ENCODE measurements at regions of chr5 and their contacts with region 1.

Region 1: DNA sequence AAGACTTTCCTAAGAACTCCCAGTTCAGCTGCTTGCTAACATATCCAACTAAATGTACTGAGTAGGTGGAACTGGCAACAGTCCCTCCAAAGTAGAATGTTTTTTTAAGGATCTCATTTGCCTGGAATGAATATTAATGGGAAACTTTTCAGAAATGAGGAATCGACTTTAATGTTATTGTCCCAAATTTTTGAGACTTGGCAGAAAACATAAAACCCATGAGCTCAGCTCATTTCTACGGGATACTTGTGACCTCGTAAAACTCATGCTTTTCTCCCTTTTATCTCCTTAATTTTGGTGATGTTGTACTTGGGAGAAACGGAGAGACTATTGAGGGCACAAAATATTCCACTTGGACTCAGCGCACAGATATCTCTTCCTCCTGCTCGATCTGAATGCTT is 296.8 kb downstream of the EBF1 start:
- DNase-seq: no peak
- ATAC-seq: no peak
- H3K4me3 ChIP-seq: no peak overlapping the region
- H3K27ac ChIP-seq: no peak overlapping the region
- H3K4me1 ChIP-seq: no peaks in the 10 kb centered on the region
- H3K27me3 ChIP-seq: no peaks in the 10 kb centered on the region
- CTCF ChIP-seq: no peak

Region 2: DNA sequence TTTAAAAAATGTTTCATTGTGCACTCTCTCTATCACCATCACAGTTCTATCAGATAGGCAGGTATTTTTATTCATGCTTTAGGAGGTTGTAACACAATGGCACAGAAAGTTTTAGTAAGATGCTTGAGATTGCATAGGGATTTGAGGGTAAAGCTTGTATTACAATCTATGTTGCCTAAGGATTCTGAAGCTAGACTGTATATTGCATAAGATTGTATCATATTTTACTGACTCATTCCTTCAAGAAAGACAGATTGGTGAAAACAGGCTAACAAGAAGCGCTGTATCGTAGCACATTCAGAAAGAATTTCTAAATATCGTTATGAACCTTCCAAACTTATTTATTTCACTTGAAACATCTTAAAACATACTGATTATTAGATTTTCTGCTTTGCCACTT is 280.9 kb before region 1 on chr5:
- intact Hi-C with region 1: no loop called
- DNase-seq: no peak
- ATAC-seq: no peak
- H3K4me3 ChIP-seq: no peak overlapping the region
- H3K27ac ChIP-seq: no peak overlapping the region
- H3K4me1 ChIP-seq: no peaks in the 10 kb centered on the region
- H3K27me3 ChIP-seq: no peaks in the 10 kb centered on the region
- CTCF ChIP-seq: no peak

Region 3: GRCh38 chr5:158841481-158842276 is 38.7 kb after region 1 on chr5:
- intact Hi-C with region 1: no loop called
- DNase-seq: no peak
- ATAC-seq: no peak
- H3K4me3 ChIP-seq: no peak overlapping the region
- H3K27ac ChIP-seq: no peak overlapping the region
- H3K4me1 ChIP-seq: no peaks in the 10 kb centered on the region
- H3K27me3 ChIP-seq: no peaks in the 10 kb centered on the region
- CTCF ChIP-seq: no peak

Region 4: GRCh38 chr5:159106569-159107282 is 303.8 kb after region 1 on chr5:
- intact Hi-C with region 1: loop called in 1 of 2 experiments (anchors 10 kb)
- DNase-seq: peak; percentile 84 to 87
- ATAC-seq: peak; percentile 69 to 90 (median 85)
- H3K4me3 ChIP-seq: peak overlapping the region; percentile 47
- H3K27ac ChIP-seq: no peak overlapping the region
- H3K4me1 ChIP-seq: no peaks in the 10 kb centered on the region
- H3K27me3 ChIP-seq: peaks cover 8 to 82% (median 9%) of the 10 kb centered on the region in 3 donors
- CTCF ChIP-seq: peak; percentile 90